Adrenal gland (tissue), 19 donors: ENCODE measurements at regions of chr11 and their contacts with region 1.

Region 1: DNA sequence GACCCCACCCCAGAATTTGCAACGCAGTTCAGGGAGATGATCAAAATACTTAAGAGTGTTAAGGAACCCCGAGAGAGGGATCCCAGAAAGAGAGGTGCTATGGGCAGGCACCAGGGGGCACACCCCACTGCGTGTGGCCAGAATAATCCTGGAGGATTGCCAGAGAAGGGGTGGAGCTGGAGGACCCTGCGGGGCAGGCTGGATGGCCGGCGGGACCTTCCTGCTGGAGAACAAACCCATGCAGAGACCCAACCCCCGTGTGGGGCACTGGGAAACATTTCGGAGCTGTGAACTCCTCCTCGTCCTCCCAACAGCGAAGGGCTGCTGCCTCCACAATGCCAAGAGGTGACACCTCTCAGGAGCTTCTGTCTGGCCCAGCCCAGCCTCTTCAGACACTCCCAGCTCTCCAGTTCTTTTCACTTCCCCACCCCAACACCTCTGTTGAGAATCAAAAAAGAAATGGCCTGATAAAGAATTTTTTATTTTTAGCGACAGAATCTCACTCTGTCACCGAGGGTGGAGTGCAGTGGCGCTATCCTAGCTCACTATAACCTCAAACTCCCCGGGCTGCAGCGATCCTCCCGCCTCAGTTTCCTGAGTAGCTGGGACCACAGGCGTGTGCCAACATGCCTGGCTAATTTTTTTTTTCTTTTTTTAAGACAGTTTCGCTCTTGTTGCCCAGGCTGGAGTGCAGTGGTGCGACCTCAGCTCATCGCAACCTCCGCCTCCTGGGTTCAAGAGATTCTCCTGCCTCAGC is 25.6 kb downstream of the RHOD start:
- DNase-seq: no peak
- H3K4me3 ChIP-seq: no peak overlapping the region
- H3K27ac ChIP-seq: no peak overlapping the region
- H3K4me1 ChIP-seq: peaks cover 0 to 8% of the 10 kb centered on the region in 2 donors
- H3K27me3 ChIP-seq: no peaks in the 10 kb centered on the region
- CTCF ChIP-seq: no peak
- POLR2A ChIP-seq: no peak

Region 2: GRCh38 chr11:67023416-67024353 is 58.5 kb before region 1 on chr11:
- intact Hi-C with region 1: no loop called
- DNase-seq: peak in 2 of 7 donors; percentile 31 to 36
- H3K4me3 ChIP-seq: peak overlapping the region in 1 of 4 donors; percentile 58
- H3K27ac ChIP-seq: no peak overlapping the region
- H3K4me1 ChIP-seq: peaks cover 0 to 10% of the 10 kb centered on the region in 2 donors
- H3K27me3 ChIP-seq: no peaks in the 10 kb centered on the region
- CTCF ChIP-seq: no peak
- POLR2A ChIP-seq: no peak

Region 3: GRCh38 chr11:67178878-67179277 is 96.7 kb after region 1 on chr11:
- intact Hi-C with region 1: loop called in 1 of 2 experiments (anchors 10 kb)
- DNase-seq: no peak
- H3K4me3 ChIP-seq: no peak overlapping the region
- H3K27ac ChIP-seq: no peak overlapping the region
- H3K4me1 ChIP-seq: peaks cover 0 to 19% of the 10 kb centered on the region in 2 donors
- H3K27me3 ChIP-seq: no peaks in the 10 kb centered on the region
- CTCF ChIP-seq: no peak
- POLR2A ChIP-seq: no peak

Region 4: GRCh38 chr11:67317205-67317887 is 235.1 kb after region 1 on chr11:
- intact Hi-C with region 1: loop called in 1 of 2 experiments (anchors 10 kb)
- DNase-seq: peak; percentile 95 to 99 (median 97)
- H3K4me3 ChIP-seq: peak overlapping the region; percentile 26 to 90 (median 60)
- H3K27ac ChIP-seq: peak overlapping the region; percentile 44 to 94 (median 80)
- H3K4me1 ChIP-seq: peaks cover 0 to 12% of the 10 kb centered on the region in 2 donors
- H3K27me3 ChIP-seq: no peaks in the 10 kb centered on the region
- CTCF ChIP-seq: peak; percentile 81 to 100 (median 98)
- POLR2A ChIP-seq: peak; percentile 34 to 46